ENCODE measurements at regions of chr17 and their contacts with region 1.

Region 1: GRCh38 chr17:82551779-82552457 is 32.4 kb downstream of the FOXK2 start:
- DNase-seq: peak; percentile 88
- CTCF ChIP-seq: peak; percentile 85

Region 2: GRCh38 chr17:82351716-82352488 is 200.0 kb before region 1 on chr17:
- in situ Hi-C with region 1: loop called (anchors 10 kb)
- DNase-seq: peak; percentile 91
- CTCF ChIP-seq: peak; percentile 93

Region 3: DNA sequence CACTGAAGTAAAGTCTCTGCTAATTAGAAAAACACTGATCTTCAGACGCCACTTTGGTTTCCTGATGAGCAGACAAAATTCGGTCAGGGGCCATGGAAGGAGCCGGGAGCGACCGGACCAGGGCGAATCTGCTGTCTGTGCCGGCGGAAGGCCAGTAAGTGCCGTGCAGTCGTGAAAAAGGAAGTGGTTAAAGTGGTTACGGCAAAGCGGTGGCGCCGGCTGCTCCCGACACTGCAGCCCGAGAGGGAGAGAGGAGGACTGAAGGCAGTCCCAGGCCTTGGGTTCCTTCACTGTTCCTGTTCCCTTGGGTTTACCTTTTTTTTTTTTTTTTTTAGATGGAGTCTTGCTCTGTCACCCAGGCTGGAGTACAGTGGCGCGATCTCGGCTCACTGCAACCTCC is 151.1 kb before region 1 on chr17:
- in situ Hi-C with region 1: no loop called
- DNase-seq: peak; percentile 91
- CTCF ChIP-seq: no peak

Region 4: DNA sequence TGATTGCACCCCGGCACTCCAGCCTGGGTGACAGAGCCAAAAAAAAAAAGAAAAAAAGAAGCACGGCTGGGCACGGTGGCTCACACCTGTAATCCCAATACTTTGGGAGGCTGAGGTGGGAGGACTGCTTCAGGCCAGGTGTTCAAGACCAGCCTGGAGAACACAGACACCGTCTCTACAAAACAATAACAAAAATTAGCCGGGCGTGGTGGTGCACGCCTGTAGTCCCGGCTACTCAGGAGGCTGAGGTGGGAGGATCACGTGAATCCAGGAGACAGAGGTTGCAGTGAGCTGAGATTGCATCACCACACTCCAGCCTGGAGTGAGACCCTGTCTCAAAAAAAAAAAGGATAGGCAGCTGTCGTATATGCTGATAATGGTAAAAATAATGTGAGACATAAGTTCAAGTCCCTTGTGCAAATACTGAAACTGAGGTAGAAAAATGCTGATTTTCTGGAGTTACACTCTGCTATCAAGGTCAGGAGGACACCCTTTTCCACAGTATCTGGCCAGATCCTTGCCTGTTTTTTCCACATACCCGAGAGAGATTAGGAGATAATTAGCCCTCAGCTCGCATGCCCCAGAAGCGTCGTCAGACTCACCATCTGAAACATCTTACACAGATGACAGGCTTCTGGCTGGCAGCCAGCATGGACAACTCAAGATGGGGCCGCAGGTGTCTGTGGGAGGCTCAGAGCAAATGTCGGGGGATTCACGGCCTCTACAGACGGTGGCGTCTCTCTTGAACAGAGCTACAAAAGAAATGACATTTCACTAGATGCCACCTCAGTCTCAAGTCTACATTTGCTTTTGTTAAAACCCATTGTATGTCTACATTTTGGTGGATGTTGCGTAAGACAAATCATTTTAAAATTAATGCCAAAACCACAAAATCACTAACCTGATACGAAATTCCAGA is 59.5 kb after region 1 on chr17:
- in situ Hi-C with region 1: no loop called
- DNase-seq: no peak
- CTCF ChIP-seq: no peak

Region 5: DNA sequence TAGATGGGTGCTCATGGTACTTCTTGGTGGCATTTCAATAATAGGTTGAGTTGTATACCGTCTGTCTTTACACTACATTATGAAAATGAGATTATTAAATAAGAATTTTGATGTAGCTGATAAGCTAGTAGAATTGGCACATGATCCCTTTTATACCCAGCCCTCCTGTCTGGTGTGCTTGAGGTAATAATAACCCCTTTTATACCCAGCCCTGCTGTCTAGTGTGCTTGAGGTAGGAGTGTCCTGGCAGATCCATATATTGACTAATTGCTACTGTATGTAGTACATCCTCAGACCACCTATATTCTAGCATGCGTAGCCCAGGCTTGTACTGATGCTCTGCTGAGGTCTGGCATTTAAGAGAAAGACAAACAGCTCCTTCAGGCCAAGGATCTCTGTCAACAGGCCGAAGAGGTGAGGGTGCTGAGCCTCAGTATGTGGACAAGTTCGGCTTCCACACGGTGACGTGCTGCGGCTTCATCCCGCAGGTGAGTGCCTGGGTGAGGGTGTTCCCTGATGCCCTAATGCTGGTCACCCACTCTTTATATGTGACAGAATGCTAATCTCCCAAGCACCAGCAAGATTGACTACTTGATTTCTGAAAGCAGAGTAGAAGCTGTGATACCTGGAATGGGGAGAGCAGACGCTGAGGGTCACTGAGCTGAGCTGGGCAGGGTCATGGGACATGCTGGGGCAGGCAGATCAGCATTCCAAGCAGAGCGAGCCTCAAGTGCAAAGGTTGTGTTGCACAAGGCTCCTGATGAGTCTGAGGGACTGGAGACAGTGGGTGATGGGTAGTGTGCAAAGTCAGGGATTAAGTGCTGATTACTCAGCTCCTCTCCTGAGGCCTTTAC is 189.2 kb after region 1 on chr17:
- in situ Hi-C with region 1: no loop called
- DNase-seq: no peak
- CTCF ChIP-seq: no peak

Measured in GM13977 (cell line).